MCF 10A (cell line): ENCODE measurements at regions of chr6 and their contacts with region 1.

Region 1: GRCh38 chr6:11496152-11497060 is 41.1 kb upstream of the TMEM170B start:
- DNase-seq: peak; percentile 87
- H3K4me3 Mint-ChIP-seq: no peak overlapping the region
- H3K27ac Mint-ChIP-seq: no peak overlapping the region
- H3K4me1 Mint-ChIP-seq: peaks cover 6% of the 10 kb centered on the region
- H3K27me3 Mint-ChIP-seq: no peaks in the 10 kb centered on the region
- CTCF ChIP-seq: peak; percentile 95

Region 2: GRCh38 chr6:10954590-10955010 is 541.8 kb before region 1 on chr6:
- CTCF ChIA-PET with region 1: interaction called, 25 read pairs
- POLR2A ChIA-PET with region 1: interaction called, 3 read pairs
- intact Hi-C with region 1: loop called (anchors 1 kb)
- DNase-seq: peak; percentile 75
- H3K4me3 Mint-ChIP-seq: no peak overlapping the region
- H3K27ac Mint-ChIP-seq: no peak overlapping the region
- H3K4me1 Mint-ChIP-seq: peaks cover 5% of the 10 kb centered on the region
- H3K27me3 Mint-ChIP-seq: no peaks in the 10 kb centered on the region
- CTCF ChIP-seq: peak; percentile 69

Region 3: DNA sequence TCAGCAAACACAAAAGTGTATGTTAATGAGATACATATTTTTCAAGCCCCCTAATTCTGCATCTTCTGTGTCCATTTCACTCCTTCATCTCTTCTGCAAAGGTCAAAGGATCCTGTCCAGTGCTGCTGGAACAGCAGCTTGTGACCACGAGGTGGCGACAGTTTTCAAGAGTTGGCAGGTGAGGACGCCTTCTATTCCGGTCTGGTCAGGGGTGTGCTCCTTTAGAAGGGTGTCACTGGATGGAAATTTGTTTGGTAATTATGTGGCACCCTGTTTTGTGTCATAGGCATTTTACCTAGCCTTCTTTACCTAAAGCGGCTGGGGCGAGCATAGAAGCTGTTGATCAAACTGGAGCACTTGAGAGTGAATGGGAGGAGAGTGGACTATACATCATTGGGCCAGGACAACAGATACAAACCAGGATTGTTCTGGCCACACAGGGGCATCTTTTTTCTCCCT is 352.0 kb before region 1 on chr6:
- CTCF ChIA-PET with region 1: interaction called, 114 read pairs
- POLR2A ChIA-PET with region 1: interaction called, 33 read pairs
- intact Hi-C with region 1: loop called (anchors 1 kb)
- DNase-seq: peak; percentile 81
- H3K4me3 Mint-ChIP-seq: no peak overlapping the region
- H3K27ac Mint-ChIP-seq: peak overlapping the region; percentile 87
- H3K4me1 Mint-ChIP-seq: peaks cover 36% of the 10 kb centered on the region
- H3K27me3 Mint-ChIP-seq: no peaks in the 10 kb centered on the region
- CTCF ChIP-seq: peak; percentile 91

Region 4: GRCh38 chr6:11232193-11232769 is 264.1 kb before region 1 on chr6 and contains the start of gene NEDD9:
- CTCF ChIA-PET with region 1: interaction called, 5 read pairs
- POLR2A ChIA-PET with region 1: interaction called, 5 read pairs
- intact Hi-C with region 1: loop called (anchors 1 kb)
- DNase-seq: peak; percentile 97
- H3K4me3 Mint-ChIP-seq: peak within 1 kb of the TSS; percentile 73
- H3K27ac Mint-ChIP-seq: peak within 1 kb of the TSS; percentile 85
- H3K4me1 Mint-ChIP-seq: peaks cover 41% of the 10 kb centered on the region
- H3K27me3 Mint-ChIP-seq: no peaks in the 10 kb centered on the region
- CTCF ChIP-seq: no peak
- total RNA-seq, gene NEDD9: 2.2 and 4.4 TPM in 2 replicates

Region 5: GRCh38 chr6:11346516-11346915 is 149.9 kb before region 1 on chr6:
- CTCF ChIA-PET with region 1: interaction called, 17 read pairs
- POLR2A ChIA-PET with region 1: no interaction called
- intact Hi-C with region 1: no loop called
- DNase-seq: no peak
- H3K4me3 Mint-ChIP-seq: no peak overlapping the region
- H3K27ac Mint-ChIP-seq: no peak overlapping the region
- H3K4me1 Mint-ChIP-seq: peaks cover 22% of the 10 kb centered on the region
- H3K27me3 Mint-ChIP-seq: no peaks in the 10 kb centered on the region
- CTCF ChIP-seq: no peak

Region 6: DNA sequence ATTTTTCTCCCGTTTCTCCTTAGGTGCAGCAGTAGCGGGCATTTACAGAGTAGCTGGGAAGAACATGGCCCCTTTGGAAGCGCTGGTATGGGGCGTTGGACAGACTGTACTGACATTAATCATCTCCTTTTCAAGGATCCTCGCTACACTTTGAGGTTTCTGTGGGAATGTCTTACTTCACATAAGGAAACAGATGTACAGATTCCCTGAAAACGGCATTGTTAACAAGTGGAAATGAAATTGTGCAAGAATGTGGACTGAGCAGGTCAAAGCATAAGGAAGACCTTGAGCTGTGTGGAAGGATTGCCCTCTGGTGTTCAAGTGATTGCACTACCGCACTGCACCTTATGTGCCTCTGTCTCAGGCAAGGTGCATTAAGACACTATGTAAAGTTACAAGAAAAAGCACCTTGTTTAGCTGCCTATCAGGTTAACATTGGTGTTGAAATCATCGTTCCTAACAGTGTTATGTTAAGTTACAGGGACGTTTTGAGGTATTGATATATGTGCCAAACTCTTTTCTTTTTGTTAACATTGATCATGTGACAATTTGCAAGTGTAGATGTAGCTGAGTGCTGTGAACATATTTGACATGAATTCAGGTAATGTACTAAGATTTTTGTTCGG is 79.1 kb after region 1 on chr6:
- CTCF ChIA-PET with region 1: interaction called, 21 read pairs
- POLR2A ChIA-PET with region 1: interaction called, 3 read pairs
- intact Hi-C with region 1: no loop called
- DNase-seq: peak; percentile 86
- H3K4me3 Mint-ChIP-seq: peak overlapping the region; percentile 12
- H3K27ac Mint-ChIP-seq: no peak overlapping the region
- H3K4me1 Mint-ChIP-seq: no peaks in the 10 kb centered on the region
- H3K27me3 Mint-ChIP-seq: no peaks in the 10 kb centered on the region
- CTCF ChIP-seq: peak; percentile 86

Region 7: GRCh38 chr6:11595903-11596302 is 99.5 kb after region 1 on chr6:
- CTCF ChIA-PET with region 1: no interaction called
- POLR2A ChIA-PET with region 1: no interaction called
- intact Hi-C with region 1: no loop called
- DNase-seq: no peak
- H3K4me3 Mint-ChIP-seq: no peak overlapping the region
- H3K27ac Mint-ChIP-seq: no peak overlapping the region
- H3K4me1 Mint-ChIP-seq: no peaks in the 10 kb centered on the region
- H3K27me3 Mint-ChIP-seq: no peaks in the 10 kb centered on the region
- CTCF ChIP-seq: no peak